MCF 10A (cell line): ENCODE measurements at regions of chr1 and their contacts with region 1.

Region 1: GRCh38 chr1:92994105-92994712 is 32.9 kb upstream of the DIPK1A start:
- DNase-seq: peak; percentile 85
- H3K4me3 Mint-ChIP-seq: no peak overlapping the region
- H3K27ac Mint-ChIP-seq: no peak overlapping the region
- H3K4me1 Mint-ChIP-seq: peaks cover 5% of the 10 kb centered on the region
- H3K27me3 Mint-ChIP-seq: no peaks in the 10 kb centered on the region
- CTCF ChIP-seq: peak; percentile 71

Region 2: DNA sequence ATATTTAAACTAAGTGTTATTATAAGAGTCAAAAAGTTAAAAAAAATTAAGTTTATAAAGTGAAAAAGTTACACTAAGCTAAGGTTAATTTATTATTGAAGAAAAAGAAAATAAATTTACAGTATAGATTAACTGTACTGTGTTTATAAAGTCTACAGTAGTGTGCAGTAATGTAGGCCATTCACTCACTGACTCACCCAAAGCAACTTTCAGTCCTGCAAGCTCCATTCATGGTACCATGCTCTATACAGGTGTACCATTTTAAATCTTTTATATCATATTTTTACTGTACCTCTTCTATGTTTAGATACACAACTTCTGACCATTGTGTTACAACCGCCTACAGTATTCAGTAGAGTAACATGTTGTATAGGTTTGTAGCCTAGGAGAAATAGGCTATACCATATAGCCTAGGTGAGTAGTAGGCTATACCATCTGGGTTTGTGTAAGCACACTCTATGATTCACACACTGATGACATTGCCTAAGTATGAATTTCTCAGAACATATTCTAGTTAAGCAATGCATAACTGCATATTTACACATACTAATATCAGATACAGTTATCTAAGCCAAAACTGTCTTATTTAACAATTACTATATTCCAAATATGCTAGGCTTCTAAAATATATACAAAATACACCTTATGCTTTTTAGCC is 426.9 kb before region 1 on chr1:
- CTCF ChIA-PET with region 1: no interaction called
- POLR2A ChIA-PET with region 1: no interaction called
- intact Hi-C with region 1: no loop called
- DNase-seq: peak; percentile 74
- H3K4me3 Mint-ChIP-seq: no peak overlapping the region
- H3K27ac Mint-ChIP-seq: no peak overlapping the region
- H3K4me1 Mint-ChIP-seq: no peaks in the 10 kb centered on the region
- H3K27me3 Mint-ChIP-seq: no peaks in the 10 kb centered on the region
- CTCF ChIP-seq: no peak

Region 3: DNA sequence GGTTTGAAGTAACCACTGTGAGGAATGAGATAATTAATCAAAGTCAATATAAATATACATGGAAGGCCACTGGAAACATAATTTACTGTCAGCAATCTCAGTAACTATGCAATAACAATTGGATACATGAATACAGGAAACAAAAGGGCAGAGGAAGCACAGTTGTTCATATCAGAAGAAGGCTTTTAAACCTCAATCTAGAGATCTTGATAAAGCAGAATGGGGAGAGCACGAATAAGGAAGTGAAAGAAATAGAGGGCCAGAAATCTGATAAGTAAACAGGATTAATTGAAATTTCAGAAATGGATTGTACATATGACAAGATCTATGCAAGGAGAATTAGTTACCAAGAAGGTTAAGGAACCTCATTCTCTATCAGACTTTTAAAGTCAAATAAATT is 302.3 kb before region 1 on chr1:
- CTCF ChIA-PET with region 1: no interaction called
- POLR2A ChIA-PET with region 1: no interaction called
- intact Hi-C with region 1: no loop called
- DNase-seq: no peak
- H3K4me3 Mint-ChIP-seq: no peak overlapping the region
- H3K27ac Mint-ChIP-seq: no peak overlapping the region
- H3K4me1 Mint-ChIP-seq: no peaks in the 10 kb centered on the region
- H3K27me3 Mint-ChIP-seq: no peaks in the 10 kb centered on the region
- CTCF ChIP-seq: no peak

Region 4: DNA sequence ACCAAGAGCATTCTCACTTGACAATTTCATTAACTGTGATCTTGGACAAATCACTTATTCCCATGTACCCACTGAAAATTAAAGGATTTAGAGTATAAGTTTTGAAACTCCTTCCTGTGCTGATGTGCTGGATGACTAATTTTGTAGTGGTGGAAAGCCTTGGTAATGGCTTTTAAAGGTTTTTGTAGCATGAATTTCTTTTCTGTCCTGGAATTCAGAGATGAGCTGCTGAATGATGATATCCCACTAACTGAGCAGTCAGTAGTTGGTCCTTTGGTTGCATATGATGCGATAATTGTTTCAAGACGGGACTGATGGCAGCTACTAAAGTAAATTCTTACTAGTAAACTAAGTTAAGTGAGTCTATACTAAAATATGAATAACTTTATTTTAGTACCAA is 157.1 kb before region 1 on chr1:
- CTCF ChIA-PET with region 1: interaction called, 10 read pairs
- POLR2A ChIA-PET with region 1: interaction called, 7 read pairs
- intact Hi-C with region 1: no loop called
- DNase-seq: no peak
- H3K4me3 Mint-ChIP-seq: peak overlapping the region; percentile 41
- H3K27ac Mint-ChIP-seq: no peak overlapping the region
- H3K4me1 Mint-ChIP-seq: peaks cover 45% of the 10 kb centered on the region
- H3K27me3 Mint-ChIP-seq: no peaks in the 10 kb centered on the region
- CTCF ChIP-seq: no peak

Region 5: GRCh38 chr1:92872719-92873118 is 121.5 kb before region 1 on chr1:
- CTCF ChIA-PET with region 1: interaction called, 17 read pairs
- POLR2A ChIA-PET with region 1: no interaction called
- intact Hi-C with region 1: no loop called
- DNase-seq: no peak
- H3K4me3 Mint-ChIP-seq: no peak overlapping the region
- H3K27ac Mint-ChIP-seq: no peak overlapping the region
- H3K4me1 Mint-ChIP-seq: no peaks in the 10 kb centered on the region
- H3K27me3 Mint-ChIP-seq: no peaks in the 10 kb centered on the region
- CTCF ChIP-seq: no peak

Region 6: DNA sequence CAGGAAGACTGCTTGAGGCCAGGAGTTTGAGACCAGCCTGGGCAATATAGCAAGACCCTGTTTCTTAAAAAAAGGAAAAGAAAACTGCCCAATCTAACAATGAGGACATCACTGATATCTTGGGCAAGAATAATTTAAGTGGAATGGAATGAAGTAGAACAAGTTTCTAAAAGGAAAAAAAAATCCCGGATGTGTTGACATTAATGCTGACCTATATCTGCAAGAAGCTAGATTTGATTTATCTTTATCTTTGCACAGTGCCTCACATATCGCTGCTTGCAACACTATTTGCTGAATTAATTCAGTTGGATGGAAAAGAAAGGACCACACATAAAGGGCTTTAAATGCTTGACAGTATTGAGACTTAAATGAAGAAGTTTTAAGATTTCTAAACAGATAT is 60.7 kb before region 1 on chr1:
- CTCF ChIA-PET with region 1: no interaction called
- POLR2A ChIA-PET with region 1: no interaction called
- intact Hi-C with region 1: no loop called
- DNase-seq: no peak
- H3K4me3 Mint-ChIP-seq: no peak overlapping the region
- H3K27ac Mint-ChIP-seq: no peak overlapping the region
- H3K4me1 Mint-ChIP-seq: peaks cover 6% of the 10 kb centered on the region
- H3K27me3 Mint-ChIP-seq: no peaks in the 10 kb centered on the region
- CTCF ChIP-seq: no peak

Region 7: GRCh38 chr1:92968138-92969032 is 25.8 kb before region 1 on chr1:
- CTCF ChIA-PET with region 1: interaction called, 114 read pairs
- POLR2A ChIA-PET with region 1: interaction called, 18 read pairs
- intact Hi-C with region 1: loop called (anchors 1 kb)
- DNase-seq: peak; percentile 45
- H3K4me3 Mint-ChIP-seq: no peak overlapping the region
- H3K27ac Mint-ChIP-seq: no peak overlapping the region
- H3K4me1 Mint-ChIP-seq: no peaks in the 10 kb centered on the region
- H3K27me3 Mint-ChIP-seq: no peaks in the 10 kb centered on the region
- CTCF ChIP-seq: peak; percentile 52

Region 8: GRCh38 chr1:93007941-93008577 is 13.8 kb after region 1 on chr1:
- CTCF ChIA-PET with region 1: interaction called, 33 read pairs
- POLR2A ChIA-PET with region 1: no interaction called
- intact Hi-C with region 1: no loop called
- DNase-seq: no peak
- H3K4me3 Mint-ChIP-seq: no peak overlapping the region
- H3K27ac Mint-ChIP-seq: no peak overlapping the region
- H3K4me1 Mint-ChIP-seq: no peaks in the 10 kb centered on the region
- H3K27me3 Mint-ChIP-seq: peaks cover 32% of the 10 kb centered on the region
- CTCF ChIP-seq: no peak

Region 9: GRCh38 chr1:93061895-93062792 is 67.9 kb after region 1 on chr1:
- CTCF ChIA-PET with region 1: interaction called, 13 read pairs
- POLR2A ChIA-PET with region 1: no interaction called
- intact Hi-C with region 1: no loop called
- DNase-seq: peak; percentile 62
- H3K4me3 Mint-ChIP-seq: no peak overlapping the region
- H3K27ac Mint-ChIP-seq: no peak overlapping the region
- H3K4me1 Mint-ChIP-seq: no peaks in the 10 kb centered on the region
- H3K27me3 Mint-ChIP-seq: peaks cover 65% of the 10 kb centered on the region
- CTCF ChIP-seq: peak; percentile 29

Region 10: DNA sequence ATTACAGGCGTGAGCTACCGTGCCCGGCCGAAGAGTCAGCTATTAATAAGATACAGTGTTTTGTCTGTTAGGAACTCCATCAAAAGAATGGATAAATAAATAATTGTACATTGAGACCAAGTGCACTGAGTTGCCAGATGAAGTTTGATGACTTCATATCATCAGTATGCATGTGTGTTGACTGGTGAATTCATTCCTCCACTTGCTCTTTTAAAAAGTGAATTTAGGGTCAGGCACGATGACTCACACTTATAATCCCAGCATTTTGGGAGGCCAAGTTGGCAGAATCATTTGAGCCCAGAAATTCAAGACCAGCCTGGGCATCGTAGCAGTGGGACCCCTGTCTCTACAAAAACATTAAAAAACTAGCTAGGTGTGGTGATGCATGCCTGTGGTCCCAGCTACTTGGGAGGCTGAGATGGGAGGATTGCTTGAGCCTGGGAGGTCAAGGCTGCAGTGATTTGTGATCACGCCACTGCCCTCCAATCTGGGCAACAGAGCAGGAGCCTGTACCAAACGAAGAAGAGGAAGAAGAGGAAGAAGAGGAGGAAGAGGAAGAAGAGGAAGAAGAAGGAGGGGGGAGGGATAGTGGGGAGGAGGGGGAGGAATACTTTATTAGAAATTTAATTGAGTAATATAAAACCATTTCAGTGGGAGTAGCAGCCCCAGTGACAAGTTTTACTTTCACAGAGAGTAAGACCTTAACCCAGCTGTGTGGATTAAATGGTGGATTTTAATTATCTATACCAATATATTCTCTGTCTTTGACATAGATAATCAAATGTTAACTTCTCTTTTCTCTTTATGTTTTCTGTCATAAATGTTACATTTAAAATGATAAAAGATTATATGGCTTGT is 261.2 kb after region 1 on chr1:
- CTCF ChIA-PET with region 1: no interaction called
- POLR2A ChIA-PET with region 1: no interaction called
- intact Hi-C with region 1: no loop called
- DNase-seq: peak; percentile 11
- H3K4me3 Mint-ChIP-seq: no peak overlapping the region
- H3K27ac Mint-ChIP-seq: no peak overlapping the region
- H3K4me1 Mint-ChIP-seq: no peaks in the 10 kb centered on the region
- H3K27me3 Mint-ChIP-seq: no peaks in the 10 kb centered on the region
- CTCF ChIP-seq: no peak